ENCODE measurements at regions of chr12 and their contacts with region 1.

Region 1: DNA sequence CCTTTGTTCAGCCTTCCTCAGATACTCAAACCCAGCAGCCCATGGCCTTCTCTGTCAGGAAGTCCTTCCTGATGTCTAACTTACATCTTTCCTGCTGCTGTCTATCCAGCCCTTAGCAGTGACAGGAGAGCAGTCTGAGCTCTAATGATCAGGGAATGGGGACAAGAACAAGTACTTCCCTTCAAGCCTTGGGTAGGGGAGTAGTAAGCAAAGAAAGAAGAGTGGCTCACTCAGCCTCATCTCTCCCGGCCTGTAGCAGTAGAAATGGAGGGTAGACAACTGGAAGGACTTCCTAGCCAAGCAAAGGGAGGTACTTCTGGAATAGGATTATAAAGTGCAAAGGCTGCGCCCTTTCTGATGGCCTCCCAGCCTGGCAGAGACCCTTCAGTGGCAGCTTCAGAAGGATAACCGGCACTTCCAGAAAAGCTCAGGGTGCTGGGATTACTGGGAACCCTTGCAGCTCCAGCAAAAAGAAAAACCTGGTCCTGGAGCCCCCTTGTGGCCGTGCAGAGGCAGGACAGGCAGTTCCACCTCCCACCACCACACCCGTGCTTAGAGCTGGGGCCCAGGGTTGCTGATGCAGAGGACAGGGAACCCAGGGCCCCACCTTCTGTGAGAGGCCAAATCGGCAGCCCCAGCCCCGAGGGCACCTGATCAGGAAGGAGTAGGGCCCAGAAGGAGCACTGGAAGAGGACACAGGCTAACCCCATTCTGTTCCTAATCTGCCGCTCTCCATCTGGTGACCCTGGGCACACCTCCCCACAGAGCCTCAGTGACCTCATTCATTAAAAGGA is 12.4 kb upstream of the SMUG1 start:
- DNase-seq: peak; percentile 43
- H3K4me3 ChIP-seq: no peak overlapping the region
- H3K27ac ChIP-seq: no peak overlapping the region
- H3K4me1 ChIP-seq: peaks cover 4% of the 10 kb centered on the region
- H3K27me3 ChIP-seq: no peaks in the 10 kb centered on the region
- CTCF ChIP-seq: peak; percentile 95 to 99

Region 2: GRCh38 chr12:53701518-53702260 is 499.5 kb before region 1 on chr12:
- CTCF ChIA-PET with region 1: no interaction called
- dilution Hi-C with region 1: no loop called
- in situ Hi-C with region 1: no loop called
- intact Hi-C with region 1: loop called (anchors 5 kb)
- DNase-seq: peak; percentile 54
- H3K4me3 ChIP-seq: no peak overlapping the region
- H3K27ac ChIP-seq: no peak overlapping the region
- H3K4me1 ChIP-seq: no peaks in the 10 kb centered on the region
- H3K27me3 ChIP-seq: peaks cover 2% of the 10 kb centered on the region
- CTCF ChIP-seq: peak; percentile 94 to 99